ENCODE measurements at regions of chr9 and their contacts with region 1.

Region 1: GRCh38 chr9:130107234-130107861 is 53.6 kb downstream of the GPR107 start:
- DNase-seq: peak; percentile 95
- ATAC-seq: peak; percentile 89
- H3K4me3 Mint-ChIP-seq: no peak overlapping the region
- H3K27ac Mint-ChIP-seq: peak overlapping the region; percentile 81
- H3K4me1 Mint-ChIP-seq: peaks cover 33% of the 10 kb centered on the region
- H3K27me3 Mint-ChIP-seq: no peaks in the 10 kb centered on the region
- CTCF ChIP-seq: peak; percentile 95

Region 2: DNA sequence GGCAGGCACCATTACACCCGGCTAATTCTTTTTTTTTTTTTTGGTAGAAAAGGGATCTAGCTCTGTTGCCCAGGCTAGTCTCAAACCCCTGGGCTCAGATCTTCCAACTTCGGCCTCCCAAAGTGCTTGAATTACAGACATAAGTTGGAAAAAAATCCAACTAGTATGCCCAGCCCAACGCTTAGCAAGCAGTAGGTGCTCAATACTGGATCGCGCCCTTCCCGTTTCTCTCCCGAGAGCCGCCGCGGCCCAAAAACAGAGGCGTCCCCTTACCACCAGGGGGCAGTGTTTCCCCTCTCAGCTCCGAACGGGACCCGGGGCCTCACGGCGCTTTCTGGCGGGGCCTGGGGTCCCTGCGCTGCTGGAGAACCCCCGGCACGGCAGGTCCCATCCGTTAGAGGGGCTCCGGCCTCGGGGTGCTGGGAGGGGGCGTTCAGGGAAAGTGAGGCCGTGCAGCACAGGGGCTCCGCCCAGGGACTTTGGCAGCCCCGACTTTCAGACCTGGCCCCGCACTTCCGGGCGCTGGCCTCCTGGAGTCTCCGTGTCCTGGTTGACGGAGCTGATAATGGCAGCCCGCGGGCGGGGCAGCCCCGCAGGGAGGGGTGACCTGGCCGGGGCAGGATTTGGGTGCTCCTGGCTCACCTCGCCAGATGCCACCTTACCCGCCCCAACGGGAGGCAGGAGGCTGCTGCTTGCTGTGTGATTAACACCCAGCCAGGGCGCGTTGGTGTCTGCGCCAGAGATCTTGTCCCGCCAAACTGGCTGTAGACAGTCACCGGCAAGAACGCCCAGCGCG is 369.7 kb before region 1 on chr9:
- CTCF ChIA-PET with region 1: no interaction called
- POLR2A ChIA-PET with region 1: no interaction called
- intact Hi-C with region 1: no loop called
- DNase-seq: peak; percentile 89
- ATAC-seq: peak; percentile 89
- H3K4me3 Mint-ChIP-seq: peak overlapping the region; percentile 55
- H3K27ac Mint-ChIP-seq: peak overlapping the region; percentile 52
- H3K4me1 Mint-ChIP-seq: peaks cover 11% of the 10 kb centered on the region
- H3K27me3 Mint-ChIP-seq: no peaks in the 10 kb centered on the region
- CTCF ChIP-seq: peak; percentile 99

Region 3: DNA sequence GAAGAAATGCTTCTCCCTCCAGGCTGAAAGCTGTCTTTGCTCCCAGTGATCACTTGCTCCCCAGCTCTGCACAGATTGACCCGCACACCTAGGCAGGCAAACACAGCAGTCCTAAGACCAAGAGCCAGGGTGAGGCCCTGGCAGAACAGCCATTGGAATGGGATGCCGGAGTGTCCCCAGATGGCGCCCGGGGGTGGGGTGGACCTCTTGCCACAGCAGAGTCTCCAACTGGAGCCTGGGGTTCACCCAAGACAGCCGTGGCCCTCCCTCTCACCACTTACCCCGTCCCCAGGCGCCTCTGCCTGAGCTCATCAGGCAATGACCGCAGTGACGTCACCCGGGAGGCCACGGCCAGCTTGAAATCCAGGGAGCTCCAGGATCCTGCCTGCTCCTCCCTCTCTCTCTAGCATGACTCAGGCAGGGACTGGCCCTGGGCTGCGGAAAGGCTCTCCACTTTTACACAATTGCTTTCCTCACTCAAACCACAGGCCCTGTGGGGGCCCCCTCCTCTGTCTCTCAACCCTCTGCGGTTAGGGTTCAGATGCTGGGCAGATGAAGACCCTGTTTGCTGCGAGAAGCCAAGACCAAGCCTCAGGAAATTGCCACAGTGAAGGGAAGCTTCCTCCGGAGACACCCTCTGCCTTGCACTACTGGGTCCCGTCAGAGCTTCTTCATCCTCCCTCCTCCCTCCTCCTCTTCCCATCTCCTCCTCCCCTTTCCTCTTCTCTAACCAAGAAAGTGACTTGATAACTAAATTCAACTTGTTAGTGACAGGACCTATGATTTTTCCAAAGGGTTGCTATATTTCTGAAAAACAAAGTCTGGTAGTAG is 330.2 kb before region 1 on chr9:
- CTCF ChIA-PET with region 1: no interaction called
- POLR2A ChIA-PET with region 1: no interaction called
- intact Hi-C with region 1: no loop called
- DNase-seq: peak; percentile 91
- ATAC-seq: peak; percentile 83
- H3K4me3 Mint-ChIP-seq: no peak overlapping the region
- H3K27ac Mint-ChIP-seq: no peak overlapping the region
- H3K4me1 Mint-ChIP-seq: peaks cover 15% of the 10 kb centered on the region
- H3K27me3 Mint-ChIP-seq: peaks cover 6% of the 10 kb centered on the region
- CTCF ChIP-seq: no peak

Region 4: GRCh38 chr9:130118841-130119518 is 11.6 kb after region 1 on chr9:
- CTCF ChIA-PET with region 1: interaction called, 12 read pairs
- POLR2A ChIA-PET with region 1: no interaction called
- intact Hi-C with region 1: no loop called
- DNase-seq: no peak
- ATAC-seq: no peak
- H3K4me3 Mint-ChIP-seq: no peak overlapping the region
- H3K27ac Mint-ChIP-seq: peak overlapping the region; percentile 3
- H3K4me1 Mint-ChIP-seq: peaks cover 12% of the 10 kb centered on the region
- H3K27me3 Mint-ChIP-seq: no peaks in the 10 kb centered on the region
- CTCF ChIP-seq: no peak

Region 5: DNA sequence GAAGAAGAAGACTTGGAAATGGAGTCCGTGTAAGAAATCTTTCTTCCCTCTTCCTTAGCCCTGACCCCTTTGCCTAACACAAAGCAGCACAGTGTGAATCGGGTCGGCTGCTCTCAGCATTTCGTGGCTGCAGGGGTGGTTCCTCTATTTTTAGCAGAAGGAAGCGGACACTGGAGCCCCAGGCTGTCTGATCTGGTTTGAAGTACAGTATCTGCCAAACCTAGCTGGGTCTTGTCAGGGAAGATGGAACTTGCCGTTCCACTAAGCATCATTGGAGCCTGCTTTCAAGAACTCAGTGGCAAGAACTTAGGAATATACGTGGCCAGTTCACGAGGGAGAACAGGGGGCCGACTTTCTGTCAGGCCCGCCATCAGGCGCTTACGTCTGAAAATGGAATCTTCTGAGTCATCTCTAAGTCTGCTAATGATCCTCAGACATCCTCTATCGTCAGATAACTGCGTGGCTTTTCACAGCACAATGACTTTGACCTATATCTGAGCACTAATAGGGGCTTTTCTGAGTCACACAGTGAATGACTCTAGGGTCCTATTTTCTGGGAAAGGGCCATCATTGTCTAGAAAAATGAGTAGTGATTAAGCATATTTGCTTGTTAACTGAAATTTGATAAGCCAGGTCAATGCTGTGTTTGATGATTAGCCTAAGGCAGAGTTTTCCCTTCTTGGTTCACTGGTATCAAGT is 21.5 kb after region 1 on chr9:
- CTCF ChIA-PET with region 1: interaction called, 27 read pairs
- POLR2A ChIA-PET with region 1: interaction called, 19 read pairs
- intact Hi-C with region 1: no loop called
- DNase-seq: peak; percentile 83
- ATAC-seq: peak; percentile 87
- H3K4me3 Mint-ChIP-seq: peak overlapping the region; percentile 73
- H3K27ac Mint-ChIP-seq: peak overlapping the region; percentile 99
- H3K4me1 Mint-ChIP-seq: peaks cover 52% of the 10 kb centered on the region
- H3K27me3 Mint-ChIP-seq: no peaks in the 10 kb centered on the region
- CTCF ChIP-seq: no peak

Region 6: DNA sequence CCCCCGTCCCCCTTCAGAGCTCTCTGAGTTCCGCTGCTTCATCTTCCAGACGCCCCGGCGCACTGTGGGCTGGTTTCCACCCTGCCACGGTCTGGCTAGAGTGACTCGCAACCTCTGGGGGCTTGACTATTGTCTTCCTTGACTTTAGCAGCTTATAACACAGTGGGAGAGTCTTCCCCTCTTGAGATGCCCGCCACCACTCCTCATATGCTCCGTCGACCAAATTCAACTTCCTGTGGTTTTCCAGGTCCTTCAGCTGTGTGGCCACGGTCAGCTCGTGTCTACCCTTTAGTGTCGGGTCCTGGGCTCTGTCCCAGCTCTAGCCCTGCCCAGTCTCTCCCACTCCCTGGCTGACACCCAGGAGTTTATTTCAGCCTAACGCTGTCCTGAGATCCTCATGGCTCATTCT is 36.6 kb after region 1 on chr9:
- CTCF ChIA-PET with region 1: interaction called, 19 read pairs
- POLR2A ChIA-PET with region 1: interaction called, 4 read pairs
- intact Hi-C with region 1: no loop called
- DNase-seq: peak; percentile 52
- ATAC-seq: peak; percentile 32
- H3K4me3 Mint-ChIP-seq: peak overlapping the region; percentile 27
- H3K27ac Mint-ChIP-seq: no peak overlapping the region
- H3K4me1 Mint-ChIP-seq: peaks cover 53% of the 10 kb centered on the region
- H3K27me3 Mint-ChIP-seq: peaks cover 24% of the 10 kb centered on the region
- CTCF ChIP-seq: no peak

Region 7: GRCh38 chr9:130172161-130172857 is 65.0 kb after region 1 on chr9 and contains the start of gene NCS1:
- CTCF ChIA-PET with region 1: interaction called, 25 read pairs
- POLR2A ChIA-PET with region 1: interaction called, 4 read pairs
- intact Hi-C with region 1: no loop called
- DNase-seq: peak; percentile 59
- ATAC-seq: peak; percentile 82
- H3K4me3 Mint-ChIP-seq: peak within 1 kb of the TSS; percentile 70
- H3K27ac Mint-ChIP-seq: no peak within 1 kb of the TSS
- H3K4me1 Mint-ChIP-seq: peaks cover 11% of the 10 kb centered on the region
- H3K27me3 Mint-ChIP-seq: peaks cover 16% of the 10 kb centered on the region
- CTCF ChIP-seq: no peak
- total RNA-seq, gene NCS1: 21.2 to 21.3 TPM

Region 8: GRCh38 chr9:130235897-130236668 is 128.7 kb after region 1 on chr9:
- CTCF ChIA-PET with region 1: interaction called, 111 read pairs
- POLR2A ChIA-PET with region 1: interaction called, 5 read pairs
- intact Hi-C with region 1: loop called (anchors 1 kb)
- DNase-seq: peak; percentile 80
- ATAC-seq: no peak
- H3K4me3 Mint-ChIP-seq: no peak overlapping the region
- H3K27ac Mint-ChIP-seq: no peak overlapping the region
- H3K4me1 Mint-ChIP-seq: peaks cover 26% of the 10 kb centered on the region
- H3K27me3 Mint-ChIP-seq: no peaks in the 10 kb centered on the region
- CTCF ChIP-seq: peak; percentile 98

Region 9: GRCh38 chr9:130243015-130243734 is 135.8 kb after region 1 on chr9:
- CTCF ChIA-PET with region 1: interaction called, 111 read pairs
- POLR2A ChIA-PET with region 1: interaction called, 5 read pairs
- intact Hi-C with region 1: no loop called
- DNase-seq: peak; percentile 92
- ATAC-seq: peak; percentile 65
- H3K4me3 Mint-ChIP-seq: no peak overlapping the region
- H3K27ac Mint-ChIP-seq: no peak overlapping the region
- H3K4me1 Mint-ChIP-seq: peaks cover 26% of the 10 kb centered on the region
- H3K27me3 Mint-ChIP-seq: peaks cover 2% of the 10 kb centered on the region
- CTCF ChIP-seq: peak; percentile 92